ENCODE measurements at regions of chr1 and their contacts with region 1.

Region 1: DNA sequence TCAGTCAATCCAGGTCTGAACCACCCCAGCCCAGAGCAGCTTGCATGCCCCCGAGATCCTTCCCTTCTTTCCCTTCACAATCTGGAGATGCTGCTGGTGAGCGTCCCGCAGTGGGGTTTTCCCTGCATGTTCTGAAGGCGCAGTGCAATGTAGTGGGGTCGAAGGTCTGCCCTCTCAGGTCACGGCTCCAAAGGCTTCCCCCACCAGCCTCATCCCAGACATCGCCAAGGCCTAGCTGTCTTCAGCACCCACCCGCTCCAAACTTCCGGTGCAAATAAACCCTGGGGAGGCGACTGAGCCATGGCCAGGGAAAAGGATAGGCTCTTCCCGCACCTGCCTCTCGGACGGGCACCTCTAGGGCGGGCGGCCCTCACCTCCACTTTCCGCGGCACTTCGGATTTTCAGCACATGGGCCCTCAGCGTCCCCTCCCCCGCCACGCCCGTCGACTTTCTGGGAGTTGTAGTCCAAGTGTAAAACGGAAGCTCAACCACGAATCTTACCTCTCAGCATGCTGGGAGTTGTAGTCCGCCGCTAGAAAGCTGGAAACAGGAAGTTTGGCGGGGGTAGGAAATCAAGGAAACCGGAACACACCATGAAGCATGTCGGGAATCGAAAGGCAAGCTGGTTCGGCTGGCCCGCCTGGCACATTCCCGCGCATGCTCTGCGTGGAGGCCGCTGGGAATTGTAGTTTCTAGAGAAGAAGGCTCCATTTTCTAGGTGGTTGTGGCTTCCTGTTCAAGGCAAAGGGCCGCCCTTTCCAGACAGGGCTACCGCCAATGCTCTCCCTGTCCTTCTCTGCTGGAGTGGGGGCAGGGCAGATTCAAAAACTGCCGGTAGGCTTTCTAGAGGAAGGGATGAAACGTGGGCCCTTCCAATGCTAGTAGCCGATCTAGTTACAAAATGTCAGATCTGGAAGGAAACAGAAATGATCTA is at the start of gene MRPL24:
- DNase-seq: peak; percentile 98
- ATAC-seq: peak; percentile 86
- H3K4me3 Mint-ChIP-seq: peak within 1 kb of the TSS; percentile 90
- H3K27ac Mint-ChIP-seq: peak within 1 kb of the TSS; percentile 100
- H3K4me1 Mint-ChIP-seq: peaks cover 25% of the 10 kb centered on the region
- H3K27me3 Mint-ChIP-seq: no peaks in the 10 kb centered on the region
- CTCF ChIP-seq: no peak
- total RNA-seq, gene MRPL24: 35.1 to 37.4 TPM (median 35.2 TPM) in 3 replicates

Region 2: DNA sequence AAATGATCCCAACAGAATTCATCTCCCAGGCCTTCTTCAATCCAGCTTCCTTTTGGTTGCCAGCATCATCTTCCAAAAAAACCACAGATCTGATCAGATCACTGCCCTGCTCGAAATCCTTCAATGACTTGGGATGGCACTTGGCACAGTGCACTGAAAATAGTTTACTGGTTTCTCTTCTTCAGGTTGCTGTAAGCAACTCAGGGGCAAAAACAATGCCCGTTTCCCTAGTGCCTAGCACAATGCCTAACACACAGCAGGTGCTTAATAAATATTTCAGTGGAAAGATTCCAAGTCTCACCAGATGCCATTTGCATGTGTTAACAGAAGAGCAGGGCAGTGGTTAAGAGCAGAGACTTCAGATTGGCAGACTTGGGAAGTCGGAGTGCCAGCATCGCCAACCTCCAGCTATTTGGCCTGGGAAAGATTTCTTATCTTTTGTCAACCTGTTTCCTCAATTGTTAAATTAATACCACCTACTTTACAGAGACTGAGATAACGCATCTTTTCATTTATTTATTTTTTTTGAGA is 23.6 kb before region 1 on chr1:
- CTCF ChIA-PET with region 1: no interaction called
- POLR2A ChIA-PET with region 1: no interaction called
- DNase-seq: no peak
- ATAC-seq: peak; percentile 37; the same call in 1 of the 2 replicates
- H3K4me3 Mint-ChIP-seq: no peak overlapping the region
- H3K27ac Mint-ChIP-seq: 0 out of 2 replicates have a peak overlapping the region, but pooled peaks have one; percentile 53
- H3K4me1 Mint-ChIP-seq: peaks cover 13% of the 10 kb centered on the region
- H3K27me3 Mint-ChIP-seq: no peaks in the 10 kb centered on the region; the same call in 1 of the 2 replicates
- CTCF ChIP-seq: no peak

Region 3: DNA sequence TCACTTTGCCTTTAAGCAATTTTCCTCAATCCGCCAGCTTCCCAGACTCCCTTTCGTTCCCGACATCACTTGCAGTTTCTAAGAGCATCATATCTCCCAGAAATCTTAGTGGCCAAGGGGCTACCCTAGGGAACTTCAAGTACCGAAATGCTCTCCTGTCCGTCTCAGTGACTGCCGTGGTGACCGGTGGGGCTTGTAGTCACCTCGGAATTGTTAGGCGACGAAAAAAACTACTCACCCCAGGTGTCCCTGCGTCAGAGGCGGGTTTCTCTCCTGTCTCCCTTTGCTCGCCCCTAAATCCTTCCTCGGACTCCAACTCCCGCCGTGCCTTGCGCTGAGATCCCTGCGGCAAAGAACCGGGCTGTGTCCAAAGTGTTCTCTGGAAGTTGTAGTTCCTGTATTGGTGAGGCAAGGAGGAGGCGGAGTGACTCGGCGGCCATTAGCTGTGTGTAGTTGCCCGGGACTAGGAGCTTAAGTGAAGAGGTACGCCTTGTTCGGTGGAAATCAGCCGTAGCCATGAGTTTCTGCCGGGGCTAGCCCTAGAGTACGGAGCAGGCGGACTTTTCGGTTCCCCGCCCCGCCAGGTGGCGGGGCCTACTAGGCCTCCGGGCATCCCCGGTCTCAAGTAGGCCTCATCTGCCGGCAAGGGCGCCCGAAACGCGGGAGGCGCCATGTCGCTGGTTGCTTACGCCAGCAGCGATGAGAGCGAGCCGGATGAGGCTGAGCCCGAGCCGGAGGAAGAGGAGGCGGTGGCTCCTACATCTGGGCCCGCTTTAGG is 26.3 kb after region 1 on chr1 and contains the start of gene PRCC:
- CTCF ChIA-PET with region 1: interaction called, 8 read pairs
- POLR2A ChIA-PET with region 1: interaction called, 21 read pairs
- DNase-seq: peak; percentile 98
- ATAC-seq: peak; percentile 96
- H3K4me3 Mint-ChIP-seq: no peak within 1 kb of the TSS
- H3K27ac Mint-ChIP-seq: peak within 1 kb of the TSS; percentile 28; the same call in 1 of the 2 replicates
- H3K4me1 Mint-ChIP-seq: peaks cover 34% of the 10 kb centered on the region
- H3K27me3 Mint-ChIP-seq: no peaks in the 10 kb centered on the region
- CTCF ChIP-seq: no peak
- total RNA-seq, gene PRCC: 97.4 to 98.5 TPM (median 98.0 TPM) in 3 replicates